MCF 10A (cell line): ENCODE measurements at regions of chr3 and their contacts with region 1.

Region 1: DNA sequence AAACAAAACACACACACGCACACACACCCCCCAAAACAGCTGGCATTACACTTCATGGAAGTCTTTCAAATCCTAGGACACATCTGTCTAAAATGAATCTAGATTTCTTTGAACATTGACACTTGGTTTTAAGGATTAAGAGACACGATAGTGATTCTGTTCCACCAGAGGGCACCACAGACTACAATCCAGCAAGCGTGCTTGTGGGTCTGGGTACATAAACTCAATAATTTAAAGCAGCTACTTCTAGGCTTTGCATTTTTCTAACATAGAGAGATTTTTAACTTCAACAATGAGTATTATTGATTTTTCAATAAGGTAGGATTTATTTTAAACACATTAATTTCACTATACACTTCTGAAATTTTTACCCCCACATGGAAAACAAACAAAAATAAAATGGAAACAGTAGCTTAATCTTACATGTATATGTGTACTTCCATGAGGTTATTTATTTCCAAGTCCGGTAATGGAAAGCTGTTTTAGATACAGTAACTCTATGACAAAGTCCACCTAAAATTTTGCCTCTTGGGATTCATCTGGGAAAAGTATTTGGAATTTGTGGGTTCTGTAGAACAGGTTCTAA is 564.0 kb upstream of the TGFBR2 start:
- DNase-seq: peak; percentile 80
- H3K4me3 Mint-ChIP-seq: no peak overlapping the region
- H3K27ac Mint-ChIP-seq: no peak overlapping the region
- H3K4me1 Mint-ChIP-seq: no peaks in the 10 kb centered on the region
- H3K27me3 Mint-ChIP-seq: no peaks in the 10 kb centered on the region
- CTCF ChIP-seq: peak; percentile 86

Region 2: GRCh38 chr3:30188713-30189112 is 146.3 kb after region 1 on chr3:
- CTCF ChIA-PET with region 1: interaction called, 17 read pairs
- POLR2A ChIA-PET with region 1: interaction called, 3 read pairs
- intact Hi-C with region 1: no loop called
- DNase-seq: peak; percentile 91
- H3K4me3 Mint-ChIP-seq: no peak overlapping the region
- H3K27ac Mint-ChIP-seq: no peak overlapping the region
- H3K4me1 Mint-ChIP-seq: peaks cover 8% of the 10 kb centered on the region
- H3K27me3 Mint-ChIP-seq: no peaks in the 10 kb centered on the region
- CTCF ChIP-seq: no peak

Region 3: GRCh38 chr3:30437171-30437601 is 394.8 kb after region 1 on chr3:
- CTCF ChIA-PET with region 1: no interaction called
- POLR2A ChIA-PET with region 1: no interaction called
- intact Hi-C with region 1: no loop called
- DNase-seq: peak; percentile 71
- H3K4me3 Mint-ChIP-seq: no peak overlapping the region
- H3K27ac Mint-ChIP-seq: no peak overlapping the region
- H3K4me1 Mint-ChIP-seq: peaks cover 13% of the 10 kb centered on the region
- H3K27me3 Mint-ChIP-seq: no peaks in the 10 kb centered on the region
- CTCF ChIP-seq: no peak